ENCODE measurements at regions of chr17 and their contacts with region 1.

Region 1: GRCh38 chr17:17723354-17724261 is 42.4 kb downstream of the RAI1 start:
- DNase-seq: peak; percentile 64
- ATAC-seq: peak; percentile 69
- H3K4me3 Mint-ChIP-seq: peak overlapping the region; percentile 73
- H3K27ac Mint-ChIP-seq: peak overlapping the region; percentile 19
- H3K4me1 Mint-ChIP-seq: peaks cover 40% of the 10 kb centered on the region
- H3K27me3 Mint-ChIP-seq: peaks cover 24% of the 10 kb centered on the region

Region 2: DNA sequence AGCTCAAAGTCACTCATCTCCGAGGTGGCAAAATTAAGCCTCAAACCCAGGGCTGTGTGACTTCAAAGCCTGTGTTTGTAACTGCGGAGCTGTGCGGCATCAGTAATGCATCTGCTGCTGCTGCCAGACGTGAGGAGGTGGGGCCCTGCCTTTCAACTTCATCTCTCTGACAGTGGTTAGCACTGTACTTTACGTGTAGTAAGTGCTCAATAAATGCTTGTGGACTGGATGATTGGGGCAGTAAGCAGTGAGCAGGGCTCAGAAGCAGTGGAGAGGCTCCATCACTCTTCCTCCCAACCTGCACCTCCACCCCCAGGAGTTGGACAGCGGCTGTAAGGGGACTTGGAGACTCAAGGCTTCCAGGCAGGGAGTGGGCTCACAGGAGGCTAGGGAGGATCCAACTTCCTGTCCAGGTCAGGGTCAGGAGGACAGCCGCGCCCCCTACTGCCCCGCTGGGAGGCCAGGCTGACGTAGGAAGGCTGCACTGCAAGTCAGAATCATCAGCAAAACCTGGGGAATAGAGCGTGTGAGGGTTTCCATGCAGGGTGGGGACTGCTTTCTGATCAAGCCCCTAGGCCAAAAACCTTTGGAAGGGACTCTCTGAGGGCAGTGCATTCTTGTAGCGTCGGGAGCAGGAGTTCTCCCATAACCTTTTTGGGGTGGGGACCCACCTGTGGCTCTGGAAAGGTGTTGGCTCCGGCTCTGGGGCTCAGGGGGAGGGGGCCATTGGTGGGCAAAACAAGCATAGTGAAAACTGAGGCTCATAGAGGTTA is 20.6 kb before region 1 on chr17:
- CTCF ChIA-PET with region 1: no interaction called
- POLR2A ChIA-PET with region 1: no interaction called
- intact Hi-C with region 1: no loop called
- DNase-seq: no peak
- ATAC-seq: no peak
- H3K4me3 Mint-ChIP-seq: no peak overlapping the region
- H3K27ac Mint-ChIP-seq: no peak overlapping the region
- H3K4me1 Mint-ChIP-seq: peaks cover 7% of the 10 kb centered on the region
- H3K27me3 Mint-ChIP-seq: no peaks in the 10 kb centered on the region

Region 3: DNA sequence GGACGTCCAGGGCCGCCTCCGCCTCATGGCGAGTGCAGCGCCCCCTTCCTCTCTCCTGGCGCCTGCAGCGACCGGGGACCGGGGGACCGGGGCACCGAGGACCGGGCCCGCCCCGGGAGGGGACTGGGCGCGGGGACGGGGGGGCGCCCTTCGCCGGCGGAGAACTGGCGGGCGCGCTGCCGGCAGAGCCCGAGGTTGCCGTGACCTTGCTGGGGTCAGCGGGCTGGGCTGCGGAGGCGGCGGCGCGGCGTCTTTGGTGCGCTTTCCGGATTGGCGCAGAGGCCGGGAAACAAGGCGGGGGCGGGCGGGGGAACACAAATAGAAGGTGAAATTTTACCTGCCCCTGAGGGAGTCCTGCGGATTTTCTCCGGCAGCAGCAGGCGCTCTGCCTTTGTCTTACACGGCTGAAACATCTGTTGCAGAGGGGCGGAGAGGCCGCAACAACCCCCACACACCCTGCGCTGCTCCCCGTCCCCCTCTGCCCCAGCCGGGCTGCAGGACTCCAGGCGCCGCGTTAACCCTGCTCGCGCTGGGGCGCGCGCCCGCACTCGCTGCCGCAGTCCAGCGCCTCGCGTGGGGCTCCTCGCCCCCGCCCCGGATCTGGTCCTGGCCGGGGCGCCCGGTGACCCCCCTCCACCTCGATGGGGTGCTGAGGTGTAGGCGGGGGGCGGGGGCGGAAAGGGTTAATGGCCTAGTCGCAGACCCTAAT is 59.7 kb after region 1 on chr17:
- CTCF ChIA-PET with region 1: no interaction called
- POLR2A ChIA-PET with region 1: no interaction called
- intact Hi-C with region 1: loop called in 1 of 2 experiments (anchors 2 kb)
- DNase-seq: peak; percentile 78
- ATAC-seq: peak; percentile 58
- H3K4me3 Mint-ChIP-seq: peak overlapping the region; percentile 55
- H3K27ac Mint-ChIP-seq: no peak overlapping the region
- H3K4me1 Mint-ChIP-seq: peaks cover 18% of the 10 kb centered on the region
- H3K27me3 Mint-ChIP-seq: no peaks in the 10 kb centered on the region

Measured in activated CD4-positive, alpha-beta T cell treated with anti-CD3 and anti-CD28 coated beads for 36 hours (primary cell).